ENCODE measurements at regions of chr11 and their contacts with region 1.

Region 1: DNA sequence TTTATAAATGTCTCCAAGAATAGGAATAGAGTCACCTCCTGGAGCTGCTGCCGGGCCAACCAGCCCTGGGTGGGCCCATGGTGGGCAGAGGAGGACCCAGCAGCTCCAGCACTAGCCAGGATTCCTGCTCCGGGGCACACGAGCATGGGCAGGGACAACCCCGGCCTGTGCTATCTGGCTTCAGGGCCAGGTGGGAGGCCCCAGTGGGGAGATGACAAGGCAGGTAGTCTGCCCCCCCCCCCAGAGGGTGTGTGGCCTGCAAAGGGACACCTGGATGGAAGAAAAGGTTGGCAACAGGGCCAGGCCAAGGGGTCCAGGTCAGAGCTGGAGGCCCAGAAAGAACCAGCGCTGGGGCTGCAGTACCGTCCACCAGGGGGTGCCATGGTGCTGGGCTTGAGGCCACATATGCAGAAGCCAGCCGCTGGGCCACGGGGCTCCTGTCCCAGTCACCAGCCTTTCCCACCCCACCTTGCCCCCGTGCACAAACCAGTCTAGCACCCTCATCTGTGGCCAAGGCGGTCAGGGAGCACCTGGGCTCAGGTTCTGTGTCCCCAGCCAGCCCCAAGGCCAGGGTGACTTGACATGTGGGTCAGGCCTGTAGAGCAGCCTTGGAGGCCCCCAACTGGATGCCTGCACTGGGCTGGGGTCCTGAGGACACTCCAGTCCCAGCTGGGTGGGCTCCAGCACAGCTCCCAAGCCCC is 3.5 kb downstream of the TSPAN32 start:
- DNase-seq: peak; percentile 86
- H3K4me3 Mint-ChIP-seq: peak overlapping the region; percentile 62
- H3K27ac Mint-ChIP-seq: peak overlapping the region; percentile 90
- H3K4me1 Mint-ChIP-seq: peaks cover 43% of the 10 kb centered on the region
- H3K27me3 Mint-ChIP-seq: no peaks in the 10 kb centered on the region

Region 2: GRCh38 chr11:2196970-2197770 is 108.1 kb before region 1 on chr11:
- CTCF ChIA-PET with region 1: interaction called, 18 read pairs
- POLR2A ChIA-PET with region 1: interaction called, 3 read pairs
- DNase-seq: peak; percentile 81
- H3K4me3 Mint-ChIP-seq: no peak overlapping the region
- H3K27ac Mint-ChIP-seq: no peak overlapping the region
- H3K4me1 Mint-ChIP-seq: peaks cover 3% of the 10 kb centered on the region
- H3K27me3 Mint-ChIP-seq: peaks cover 14% of the 10 kb centered on the region

Region 3: DNA sequence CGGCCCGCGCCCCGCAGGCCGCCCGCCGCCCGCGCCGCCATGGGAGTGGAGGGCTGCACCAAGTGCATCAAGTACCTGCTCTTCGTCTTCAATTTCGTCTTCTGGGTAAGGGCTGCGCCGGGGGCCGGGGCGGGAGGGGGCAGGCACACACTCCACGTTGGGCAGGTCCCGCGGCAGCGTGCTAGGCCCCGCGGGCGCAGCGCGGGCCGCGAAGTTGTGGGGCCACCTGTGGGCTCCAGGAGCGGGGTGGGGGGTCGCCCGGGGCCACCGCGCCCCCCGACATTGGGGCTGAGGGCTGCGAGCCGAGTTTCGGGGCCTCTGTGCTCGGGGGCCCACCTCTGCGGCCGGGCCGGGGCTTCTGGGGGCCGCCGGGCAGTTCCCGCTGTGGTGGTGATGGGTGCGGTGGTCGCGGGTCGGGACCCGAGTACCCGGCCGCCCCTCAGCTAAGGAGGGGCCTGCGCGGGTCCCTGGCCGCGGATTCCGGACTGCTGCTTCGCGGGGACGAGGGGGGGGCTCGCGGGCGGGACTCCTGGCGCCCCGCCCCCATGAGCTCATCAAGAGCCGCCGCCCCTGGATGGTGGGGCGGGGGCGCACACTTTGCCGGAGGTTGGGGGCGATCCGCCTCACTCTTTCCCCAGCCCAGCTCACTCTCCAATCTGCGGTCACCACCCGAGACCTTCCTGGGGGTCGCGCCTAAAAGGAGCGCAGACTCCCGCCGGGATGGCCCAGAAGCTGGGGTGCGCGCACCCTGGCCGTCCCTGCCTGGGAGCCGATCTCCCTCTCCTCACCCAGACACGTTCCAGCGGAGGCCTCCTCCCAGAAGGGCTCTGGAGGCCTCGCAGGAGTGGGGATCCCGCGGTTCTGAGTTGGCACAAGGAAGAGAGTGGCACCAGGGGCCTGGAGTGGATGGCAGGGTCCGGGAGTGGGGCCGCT is 72.5 kb after region 1 on chr11:
- CTCF ChIA-PET with region 1: interaction called, 15 read pairs
- POLR2A ChIA-PET with region 1: interaction called, 34 read pairs
- DNase-seq: peak; percentile 66
- H3K4me3 Mint-ChIP-seq: peak overlapping the region; percentile 85
- H3K27ac Mint-ChIP-seq: peak overlapping the region; percentile 75
- H3K4me1 Mint-ChIP-seq: peaks cover 37% of the 10 kb centered on the region
- H3K27me3 Mint-ChIP-seq: peaks cover under 1% of the 10 kb centered on the region

Region 4: GRCh38 chr11:2387266-2387987 is 82.1 kb after region 1 on chr11:
- CTCF ChIA-PET with region 1: interaction called, 16 read pairs
- POLR2A ChIA-PET with region 1: interaction called, 3 read pairs
- DNase-seq: peak; percentile 42
- H3K4me3 Mint-ChIP-seq: no peak overlapping the region
- H3K27ac Mint-ChIP-seq: peak overlapping the region; percentile 76
- H3K4me1 Mint-ChIP-seq: peaks cover 67% of the 10 kb centered on the region
- H3K27me3 Mint-ChIP-seq: no peaks in the 10 kb centered on the region

Region 5: DNA sequence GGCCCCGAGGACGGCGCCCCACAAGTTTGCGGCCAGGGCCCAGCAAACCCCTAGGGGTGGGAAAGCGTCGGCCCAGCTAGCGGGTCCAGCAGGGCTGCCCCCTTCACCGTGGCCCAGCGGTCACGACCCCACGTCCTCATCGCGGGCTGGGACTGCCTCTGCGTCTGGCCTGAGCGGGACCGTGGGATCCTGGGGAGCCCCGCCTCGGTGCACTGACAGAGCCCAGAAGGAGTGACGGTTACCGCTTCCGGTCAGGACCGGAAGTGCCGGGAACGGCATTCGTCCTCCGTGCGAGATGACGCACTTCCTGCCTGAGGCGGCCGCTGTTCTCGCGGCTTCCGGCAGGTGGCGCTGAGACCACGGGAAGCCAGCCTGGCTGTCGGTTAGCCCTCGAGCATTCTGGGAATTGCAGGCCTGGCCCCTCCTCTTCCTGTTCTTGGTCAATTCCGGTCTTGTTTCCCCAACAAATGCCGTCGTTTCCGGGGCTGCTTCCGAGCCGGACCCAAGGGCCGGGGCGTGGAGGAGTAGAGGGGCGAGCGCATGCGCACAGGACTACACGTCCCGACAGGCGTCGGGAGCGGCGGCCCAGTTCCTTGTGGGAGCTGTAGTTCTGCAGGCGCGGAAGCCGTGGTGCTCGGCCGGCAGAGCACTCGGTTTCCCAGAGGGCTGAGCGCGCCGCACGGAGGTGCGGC is 94.9 kb after region 1 on chr11 and contains the start of gene TSSC4:
- CTCF ChIA-PET with region 1: interaction called, 42 read pairs
- POLR2A ChIA-PET with region 1: interaction called, 27 read pairs
- DNase-seq: peak; percentile 99
- H3K4me3 Mint-ChIP-seq: peak within 1 kb of the TSS; percentile 87
- H3K27ac Mint-ChIP-seq: peak within 1 kb of the TSS; percentile 87
- H3K4me1 Mint-ChIP-seq: peaks cover 19% of the 10 kb centered on the region
- H3K27me3 Mint-ChIP-seq: no peaks in the 10 kb centered on the region
- total RNA-seq, gene TSSC4: 46.4 to 46.5 TPM

Region 6: GRCh38 chr11:2420502-2421225 is 115.4 kb after region 1 on chr11:
- CTCF ChIA-PET with region 1: interaction called, 201 read pairs
- POLR2A ChIA-PET with region 1: interaction called, 21 read pairs
- DNase-seq: peak; percentile 70
- H3K4me3 Mint-ChIP-seq: no peak overlapping the region
- H3K27ac Mint-ChIP-seq: no peak overlapping the region
- H3K4me1 Mint-ChIP-seq: peaks cover 1% of the 10 kb centered on the region
- H3K27me3 Mint-ChIP-seq: no peaks in the 10 kb centered on the region

Region 7: DNA sequence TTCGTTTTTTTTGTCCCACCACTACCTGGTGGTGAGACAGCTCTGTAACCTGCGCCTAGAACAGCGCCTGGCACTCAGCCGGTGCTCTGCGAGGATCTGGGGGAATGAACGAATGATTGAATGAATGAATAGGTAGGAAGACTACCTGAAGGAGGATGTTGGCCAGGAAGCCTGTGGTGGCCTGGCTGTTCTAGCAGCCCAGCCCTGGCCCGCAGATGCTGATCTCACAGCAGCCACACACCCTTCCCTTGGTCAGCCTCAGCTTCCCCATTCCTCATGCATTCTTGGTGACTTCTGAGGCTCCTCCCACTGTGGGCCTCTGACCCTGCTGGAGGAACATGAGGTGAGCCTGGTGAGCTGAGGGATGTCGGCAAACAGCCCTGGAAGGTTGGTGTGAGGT is 135.4 kb after region 1 on chr11:
- CTCF ChIA-PET with region 1: no interaction called
- POLR2A ChIA-PET with region 1: no interaction called
- DNase-seq: no peak
- H3K4me3 Mint-ChIP-seq: no peak overlapping the region
- H3K27ac Mint-ChIP-seq: no peak overlapping the region
- H3K4me1 Mint-ChIP-seq: peaks cover 14% of the 10 kb centered on the region
- H3K27me3 Mint-ChIP-seq: peaks cover 14% of the 10 kb centered on the region

Measured in activated CD4-positive, alpha-beta memory T cell treated with anti-CD3 and anti-CD28 coated beads, Interleukin-2, amount 10 ng/mL, durations not matched to agents 7 days and 5 days (primary cell).